ENCODE measurements at regions of chr2 and their contacts with region 1.

Region 1: DNA sequence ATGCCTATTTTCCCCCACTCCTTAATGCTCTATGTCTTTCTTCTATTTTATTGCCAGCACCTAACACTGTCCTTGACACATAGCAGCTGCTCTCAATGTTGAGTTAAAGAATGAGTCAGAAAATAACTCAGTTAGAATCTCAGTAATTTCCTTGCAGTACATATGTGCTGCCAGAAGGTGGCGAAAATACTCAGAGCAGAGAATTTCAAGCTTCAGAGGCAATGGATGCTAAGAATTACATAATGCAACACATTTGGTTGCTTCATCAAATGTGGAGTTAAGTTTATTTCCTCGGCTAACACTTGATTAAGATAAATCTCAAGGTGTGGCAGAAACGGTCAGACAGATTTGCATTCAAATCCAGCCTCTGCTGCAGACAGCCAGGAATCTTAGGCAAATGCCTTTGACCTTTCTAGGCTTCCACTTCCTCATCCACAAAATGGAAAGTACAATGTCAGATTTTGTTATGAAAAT is 105.6 kb downstream of the VSNL1 start:
- DNase-seq: peak; percentile 32 to 73
- H3K4me3 ChIP-seq: no peak overlapping the region
- H3K27ac ChIP-seq: peak overlapping the region; percentile 55
- H3K4me1 ChIP-seq: peaks cover 28% of the 10 kb centered on the region
- H3K27me3 ChIP-seq: no peaks in the 10 kb centered on the region
- CTCF ChIP-seq: peak; percentile 95

Region 2: GRCh38 chr2:17540093-17540812 is 105.9 kb before region 1 on chr2 and contains the start of gene VSNL1:
- CTCF ChIA-PET with region 1: no interaction called
- POLR2A ChIA-PET with region 1: no interaction called
- intact Hi-C with region 1: loop called (anchors 2 kb)
- DNase-seq: peak; percentile 43 to 57
- H3K4me3 ChIP-seq: peak within 1 kb of the TSS; percentile 63
- H3K27ac ChIP-seq: no peak within 1 kb of the TSS
- H3K4me1 ChIP-seq: peaks cover 19% of the 10 kb centered on the region; the same call in 1 of the 2 replicates
- H3K27me3 ChIP-seq: no peaks in the 10 kb centered on the region
- CTCF ChIP-seq: no peak
- total RNA-seq, gene VSNL1: not detected in 2 replicates

Region 3: DNA sequence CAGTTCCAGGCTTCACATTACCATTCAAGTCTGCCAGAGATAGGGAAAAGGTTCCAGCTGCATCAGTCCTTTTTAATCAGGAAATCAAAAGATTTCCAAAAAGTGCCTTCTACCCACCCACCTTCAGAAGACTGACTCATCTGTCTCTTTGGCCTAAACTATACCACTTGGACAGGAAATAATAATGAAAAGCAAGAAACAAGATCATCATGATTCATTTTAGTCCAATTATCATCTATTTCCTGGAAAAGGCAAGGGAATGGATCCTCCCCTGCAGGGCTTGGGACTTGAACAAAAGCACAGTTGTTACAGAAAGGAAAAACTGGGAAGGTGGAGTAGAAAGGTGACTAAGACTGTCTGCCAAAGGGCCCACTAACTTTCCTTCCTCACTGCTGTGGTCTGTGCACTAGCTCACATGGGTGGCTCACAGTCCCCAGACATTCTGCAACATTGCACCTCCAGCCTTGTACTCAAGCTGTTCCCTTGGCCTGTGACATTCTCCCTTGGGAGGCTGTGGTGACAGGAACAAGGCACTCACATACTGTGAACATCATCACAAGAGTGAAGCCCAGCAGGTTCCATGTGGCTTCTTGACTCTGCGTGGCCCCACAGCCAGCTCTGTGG is 30.3 kb before region 1 on chr2:
- CTCF ChIA-PET with region 1: no interaction called
- POLR2A ChIA-PET with region 1: no interaction called
- intact Hi-C with region 1: no loop called
- DNase-seq: peak; percentile 7 to 43
- H3K4me3 ChIP-seq: no peak overlapping the region
- H3K27ac ChIP-seq: peak overlapping the region; percentile 30
- H3K4me1 ChIP-seq: peaks cover 19% of the 10 kb centered on the region
- H3K27me3 ChIP-seq: no peaks in the 10 kb centered on the region
- CTCF ChIP-seq: no peak